ENCODE measurements at regions of chr11 and their contacts with region 1.

Region 1: DNA sequence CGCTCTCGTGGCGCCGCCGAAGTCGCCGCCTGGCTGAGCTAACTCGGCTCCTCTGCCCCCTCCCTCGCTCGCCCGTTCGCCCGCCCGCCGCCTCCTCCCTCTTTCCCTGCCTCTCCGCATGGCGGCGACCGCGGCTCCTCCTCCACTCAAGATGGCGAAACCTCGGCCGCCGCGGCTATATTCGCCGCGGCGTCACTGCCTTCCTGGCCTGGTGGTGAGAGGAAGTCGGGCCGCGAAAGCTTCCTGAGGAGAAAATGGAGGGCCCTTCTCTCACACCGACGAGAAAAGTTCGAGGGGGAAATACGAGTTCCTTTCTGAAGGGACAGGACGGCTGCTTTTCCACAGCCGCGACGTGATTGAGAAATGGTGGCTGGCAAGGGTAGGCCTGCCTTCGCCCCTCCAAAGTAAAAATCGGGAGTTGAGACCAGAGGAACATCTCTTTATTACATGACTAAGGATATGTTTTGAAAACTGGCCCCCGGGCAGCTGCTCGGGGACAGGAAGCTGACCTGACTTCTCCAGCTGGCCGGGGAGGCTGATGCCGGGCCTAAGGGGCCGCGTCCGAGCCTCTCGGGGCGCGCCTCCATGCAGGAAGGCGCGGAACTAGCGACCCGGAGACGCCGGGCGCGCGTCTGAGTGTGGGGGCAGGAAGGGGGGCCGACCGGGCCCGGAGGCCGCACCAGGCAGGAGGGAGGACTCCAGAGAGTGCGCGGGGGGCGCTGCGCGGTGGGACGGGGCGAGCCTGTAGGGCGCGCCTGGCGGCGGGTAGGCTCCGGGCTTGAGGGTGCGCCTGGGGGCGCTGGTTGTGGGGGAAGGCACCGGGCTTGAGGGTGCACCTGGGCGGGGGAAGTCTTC is at the start of gene DDX6:
- DNase-seq: peak; percentile 83
- ATAC-seq: peak; percentile 60
- H3K4me3 Mint-ChIP-seq: peak within 1 kb of the TSS; percentile 100
- H3K27ac Mint-ChIP-seq: peak within 1 kb of the TSS; percentile 99
- H3K4me1 Mint-ChIP-seq: peaks cover 47% of the 10 kb centered on the region
- H3K27me3 Mint-ChIP-seq: no peaks in the 10 kb centered on the region
- CTCF ChIP-seq: no peak
- total RNA-seq, gene DDX6: 263 and 297 TPM in 2 replicates

Region 2: DNA sequence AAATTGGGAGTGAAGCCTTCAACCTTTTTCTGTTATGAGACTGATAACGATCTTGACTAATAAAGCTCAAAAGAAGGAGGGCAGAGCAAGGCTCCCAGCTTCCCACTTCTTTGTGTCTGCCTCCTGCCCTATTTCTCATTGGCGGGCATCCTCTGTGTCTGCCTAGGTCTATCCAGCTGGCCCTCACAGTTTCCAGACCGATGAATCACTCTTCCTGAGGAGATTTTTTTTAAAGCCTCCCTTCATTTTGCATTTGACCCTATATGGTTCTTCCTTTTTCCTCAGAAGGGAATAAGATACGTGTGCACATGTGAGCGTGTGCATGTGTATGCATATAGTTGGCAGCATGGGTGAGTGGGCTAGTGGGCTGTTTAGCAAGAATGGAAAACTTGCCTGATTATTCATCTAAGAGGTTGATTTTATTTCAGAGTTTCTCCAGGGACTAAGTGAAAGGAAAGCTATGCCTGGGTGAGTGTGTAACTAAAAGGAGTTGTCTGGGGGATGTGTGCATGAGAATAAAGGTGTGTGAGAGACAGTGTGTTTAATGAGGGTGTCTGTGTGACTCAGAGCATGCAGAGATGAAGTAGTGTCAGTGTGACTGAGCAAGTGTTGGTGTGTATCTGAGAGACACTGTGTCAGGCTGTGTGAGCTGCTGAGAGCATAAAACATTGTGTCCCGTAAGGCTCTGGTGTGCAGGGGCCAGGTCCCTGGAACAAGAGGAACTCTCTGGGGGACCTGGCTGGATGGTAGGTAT is 171.7 kb before region 1 on chr11:
- CTCF ChIA-PET with region 1: no interaction called
- POLR2A ChIA-PET with region 1: no interaction called
- intact Hi-C with region 1: no loop called
- DNase-seq: no peak
- ATAC-seq: no peak
- H3K4me3 Mint-ChIP-seq: no peak overlapping the region
- H3K27ac Mint-ChIP-seq: no peak overlapping the region
- H3K4me1 Mint-ChIP-seq: peaks cover 9% of the 10 kb centered on the region
- H3K27me3 Mint-ChIP-seq: peaks cover 23% of the 10 kb centered on the region
- CTCF ChIP-seq: no peak

Region 3: DNA sequence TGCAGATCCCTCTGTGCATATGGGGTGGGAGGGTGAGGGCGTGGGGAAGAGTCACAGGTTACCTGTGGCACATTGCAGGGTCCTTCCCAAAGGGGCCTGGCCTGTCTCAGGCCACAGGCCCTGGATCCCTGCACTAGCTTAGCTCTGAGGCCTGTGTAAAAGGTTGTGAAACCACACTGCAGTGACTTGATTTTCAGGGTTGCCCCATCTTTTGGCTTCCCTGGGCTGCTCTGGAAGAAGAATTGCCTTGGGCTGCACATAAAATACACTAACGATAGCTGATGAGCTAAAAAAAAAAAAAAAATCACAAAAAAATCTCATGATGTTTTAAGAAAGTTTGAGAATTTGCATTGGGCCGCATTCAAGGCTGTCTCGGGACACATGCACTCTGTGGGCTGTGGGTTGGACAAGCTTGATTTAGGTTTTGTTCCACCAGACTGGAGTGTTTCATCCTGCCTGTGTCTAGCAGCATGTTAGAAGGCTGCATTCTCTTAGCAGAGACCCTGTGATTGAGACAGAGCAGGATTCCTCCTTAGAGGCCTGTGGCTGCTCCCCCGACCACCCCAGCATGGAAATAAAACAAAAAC is 76.0 kb before region 1 on chr11:
- CTCF ChIA-PET with region 1: no interaction called
- POLR2A ChIA-PET with region 1: no interaction called
- intact Hi-C with region 1: no loop called
- DNase-seq: no peak
- ATAC-seq: peak; percentile 21
- H3K4me3 Mint-ChIP-seq: no peak overlapping the region
- H3K27ac Mint-ChIP-seq: peak overlapping the region; percentile 4
- H3K4me1 Mint-ChIP-seq: peaks cover 11% of the 10 kb centered on the region
- H3K27me3 Mint-ChIP-seq: no peaks in the 10 kb centered on the region
- CTCF ChIP-seq: no peak

Region 4: GRCh38 chr11:118752654-118753053 is 38.7 kb before region 1 on chr11:
- CTCF ChIA-PET with region 1: no interaction called
- POLR2A ChIA-PET with region 1: interaction called, 3 read pairs
- intact Hi-C with region 1: loop called (anchors 5 kb)
- DNase-seq: no peak
- ATAC-seq: no peak
- H3K4me3 Mint-ChIP-seq: no peak overlapping the region
- H3K27ac Mint-ChIP-seq: no peak overlapping the region
- H3K4me1 Mint-ChIP-seq: no peaks in the 10 kb centered on the region
- H3K27me3 Mint-ChIP-seq: no peaks in the 10 kb centered on the region
- CTCF ChIP-seq: no peak

Region 5: GRCh38 chr11:118838905-118839553 is 47.7 kb after region 1 on chr11:
- CTCF ChIA-PET with region 1: interaction called, 4 read pairs
- POLR2A ChIA-PET with region 1: interaction called, 162 read pairs
- intact Hi-C with region 1: loop called (anchors 1 kb)
- DNase-seq: no peak
- ATAC-seq: peak; percentile 78
- H3K4me3 Mint-ChIP-seq: peak overlapping the region; percentile 47
- H3K27ac Mint-ChIP-seq: peak overlapping the region; percentile 85
- H3K4me1 Mint-ChIP-seq: peaks cover 61% of the 10 kb centered on the region
- H3K27me3 Mint-ChIP-seq: no peaks in the 10 kb centered on the region
- CTCF ChIP-seq: no peak

Region 6: DNA sequence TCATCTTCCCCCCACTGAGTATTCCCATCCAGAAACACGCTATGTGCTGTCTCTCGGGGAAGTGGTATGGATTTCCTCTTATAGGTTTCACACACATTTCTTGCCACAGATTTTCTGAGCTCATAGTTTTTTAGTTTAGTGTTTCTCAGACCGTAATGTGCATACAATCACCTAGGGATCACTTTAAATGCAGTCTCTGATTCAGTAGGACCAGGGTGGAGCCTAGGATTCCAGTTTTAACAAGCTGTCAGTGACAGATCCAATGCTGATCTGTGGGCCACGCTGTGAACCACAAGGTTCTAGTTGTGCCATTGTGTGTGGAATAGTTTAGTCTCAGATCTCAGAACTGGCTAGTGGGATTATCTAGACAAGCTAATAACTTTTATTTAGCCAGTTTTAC is 68.6 kb after region 1 on chr11:
- CTCF ChIA-PET with region 1: no interaction called
- POLR2A ChIA-PET with region 1: interaction called, 16 read pairs
- intact Hi-C with region 1: no loop called
- DNase-seq: no peak
- ATAC-seq: no peak
- H3K4me3 Mint-ChIP-seq: no peak overlapping the region
- H3K27ac Mint-ChIP-seq: peak overlapping the region; percentile 4
- H3K4me1 Mint-ChIP-seq: peaks cover 37% of the 10 kb centered on the region
- H3K27me3 Mint-ChIP-seq: no peaks in the 10 kb centered on the region
- CTCF ChIP-seq: no peak

Region 7: GRCh38 chr11:118883368-118884071 is 92.2 kb after region 1 on chr11 and contains the start of gene CXCR5:
- CTCF ChIA-PET with region 1: no interaction called
- POLR2A ChIA-PET with region 1: interaction called, 162 read pairs
- intact Hi-C with region 1: loop called (anchors 1 kb)
- DNase-seq: peak; percentile 69
- ATAC-seq: peak; percentile 78
- H3K4me3 Mint-ChIP-seq: peak within 1 kb of the TSS; percentile 98
- H3K27ac Mint-ChIP-seq: peak within 1 kb of the TSS; percentile 98
- H3K4me1 Mint-ChIP-seq: peaks cover 71% of the 10 kb centered on the region
- H3K27me3 Mint-ChIP-seq: no peaks in the 10 kb centered on the region
- CTCF ChIP-seq: no peak
- total RNA-seq, gene CXCR5: 198 and 199 TPM in 2 replicates

Region 8: DNA sequence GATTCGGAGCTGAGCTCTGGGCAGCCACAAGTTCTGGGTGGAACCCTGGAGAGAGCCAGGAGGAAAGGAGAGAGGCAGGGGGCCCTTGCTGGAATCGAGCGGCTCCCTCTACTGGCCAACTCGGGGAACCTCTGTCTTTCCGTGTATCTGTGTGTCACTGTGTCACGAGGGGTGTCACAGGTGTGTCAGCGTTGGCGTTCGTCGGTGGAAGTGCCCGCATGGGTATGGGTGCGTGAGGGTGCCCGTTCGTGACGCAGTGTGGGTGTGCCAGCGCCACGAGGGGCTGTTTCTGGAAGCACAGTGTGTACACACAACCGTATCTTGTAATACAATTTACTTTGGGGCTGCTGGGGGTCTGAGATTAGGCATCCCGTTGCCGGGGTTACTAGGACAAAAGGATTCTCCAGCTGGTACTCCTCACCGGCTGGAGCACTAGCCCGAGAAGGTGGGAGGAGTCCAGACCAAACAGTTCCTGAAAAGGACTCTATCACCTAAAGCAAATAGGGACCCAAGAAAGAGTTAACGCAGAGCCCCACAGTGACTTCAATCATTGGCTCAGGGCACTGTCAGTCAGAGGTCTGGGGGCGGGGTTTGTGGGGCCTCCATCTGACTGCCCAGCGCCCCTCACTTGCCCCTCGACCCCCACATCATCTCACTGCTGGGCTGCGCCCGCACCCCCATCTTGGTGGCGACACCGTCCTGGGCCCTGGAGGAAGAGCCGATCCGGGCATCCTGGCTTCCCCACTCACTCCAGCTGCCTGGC is 137.0 kb after region 1 on chr11:
- CTCF ChIA-PET with region 1: interaction called, 6 read pairs
- POLR2A ChIA-PET with region 1: interaction called, 48 read pairs
- intact Hi-C with region 1: loop called (anchors 1 kb)
- DNase-seq: peak; percentile 94
- ATAC-seq: peak; percentile 52
- H3K4me3 Mint-ChIP-seq: peak overlapping the region; percentile 95
- H3K27ac Mint-ChIP-seq: peak overlapping the region; percentile 98
- H3K4me1 Mint-ChIP-seq: peaks cover 62% of the 10 kb centered on the region
- H3K27me3 Mint-ChIP-seq: peaks cover 2% of the 10 kb centered on the region
- CTCF ChIP-seq: peak; percentile 87

Region 9: GRCh38 chr11:119057000-119057769 is 265.8 kb after region 1 on chr11 and contains the start of gene HYOU1:
- CTCF ChIA-PET with region 1: no interaction called
- POLR2A ChIA-PET with region 1: no interaction called
- intact Hi-C with region 1: loop called (anchors 5 kb)
- DNase-seq: peak; percentile 97
- ATAC-seq: peak; percentile 94
- H3K4me3 Mint-ChIP-seq: peak within 1 kb of the TSS; percentile 96
- H3K27ac Mint-ChIP-seq: peak within 1 kb of the TSS; percentile 95
- H3K4me1 Mint-ChIP-seq: peaks cover 40% of the 10 kb centered on the region
- H3K27me3 Mint-ChIP-seq: no peaks in the 10 kb centered on the region
- CTCF ChIP-seq: no peak
- total RNA-seq, gene HYOU1: 120 and 122 TPM in 2 replicates

Measured in activated B cell treated with CpG ODN at 0.5 μM for 24 hours (primary cell).